Sigmoid colon (tissue), 7 donors: ENCODE measurements at regions of chr19 and their contacts with region 1.

Region 1: GRCh38 chr19:531009-531752 is 379 bp upstream of the CDC34 start:
- DNase-seq: peak; percentile 91
- H3K4me3 ChIP-seq: peak overlapping the region; percentile 74 to 94 (median 86)
- H3K27ac ChIP-seq: peak overlapping the region; percentile 98 to 100 (median 99)
- H3K4me1 ChIP-seq: peaks cover 0 to 43% (median 38%) of the 10 kb centered on the region in 4 donors
- H3K27me3 ChIP-seq: peaks cover 0 to 13% (median 6%) of the 10 kb centered on the region in 3 donors
- CTCF ChIP-seq: no peak
- EP300 ChIP-seq: no peak
- POLR2A ChIP-seq: no peak

Region 2: GRCh38 chr19:347946-348861 is 183.0 kb before region 1 on chr19:
- intact Hi-C with region 1: no loop called
- DNase-seq: peak; percentile 57
- H3K4me3 ChIP-seq: no peak overlapping the region
- H3K27ac ChIP-seq: no peak overlapping the region
- H3K4me1 ChIP-seq: peaks cover 0 to 16% (median 10%) of the 10 kb centered on the region in 4 donors
- H3K27me3 ChIP-seq: no peaks in the 10 kb centered on the region
- CTCF ChIP-seq: no peak
- EP300 ChIP-seq: no peak
- POLR2A ChIP-seq: no peak

Region 3: GRCh38 chr19:506404-507285 is 24.5 kb before region 1 on chr19:
- intact Hi-C with region 1: loop called (anchors 2 kb)
- DNase-seq: peak; percentile 100
- H3K4me3 ChIP-seq: peak overlapping the region; percentile 82 to 100 (median 98)
- H3K27ac ChIP-seq: peak overlapping the region; percentile 88 to 98 (median 96)
- H3K4me1 ChIP-seq: peaks cover 0 to 34% (median 31%) of the 10 kb centered on the region in 4 donors
- H3K27me3 ChIP-seq: no peaks in the 10 kb centered on the region
- CTCF ChIP-seq: peak; percentile 96 to 100 (median 99)
- EP300 ChIP-seq: no peak
- POLR2A ChIP-seq: no peak

Region 4: GRCh38 chr19:572140-572742 is 41.1 kb after region 1 on chr19 and contains the start of gene BSG:
- intact Hi-C with region 1: loop called (anchors 1 kb)
- DNase-seq: peak; percentile 99
- H3K4me3 ChIP-seq: peak within 1 kb of the TSS; percentile 98 to 100 (median 100)
- H3K27ac ChIP-seq: peak within 1 kb of the TSS; percentile 96 to 98 (median 97)
- H3K4me1 ChIP-seq: peaks cover 0 to 65% (median 54%) of the 10 kb centered on the region in 4 donors
- H3K27me3 ChIP-seq: no peaks in the 10 kb centered on the region
- CTCF ChIP-seq: no peak
- EP300 ChIP-seq: peak in 1 of 4 donors; percentile 58
- POLR2A ChIP-seq: peak; percentile 74 to 83
- total RNA-seq, gene BSG: 423 to 500 (median 482) TPM

Region 5: DNA sequence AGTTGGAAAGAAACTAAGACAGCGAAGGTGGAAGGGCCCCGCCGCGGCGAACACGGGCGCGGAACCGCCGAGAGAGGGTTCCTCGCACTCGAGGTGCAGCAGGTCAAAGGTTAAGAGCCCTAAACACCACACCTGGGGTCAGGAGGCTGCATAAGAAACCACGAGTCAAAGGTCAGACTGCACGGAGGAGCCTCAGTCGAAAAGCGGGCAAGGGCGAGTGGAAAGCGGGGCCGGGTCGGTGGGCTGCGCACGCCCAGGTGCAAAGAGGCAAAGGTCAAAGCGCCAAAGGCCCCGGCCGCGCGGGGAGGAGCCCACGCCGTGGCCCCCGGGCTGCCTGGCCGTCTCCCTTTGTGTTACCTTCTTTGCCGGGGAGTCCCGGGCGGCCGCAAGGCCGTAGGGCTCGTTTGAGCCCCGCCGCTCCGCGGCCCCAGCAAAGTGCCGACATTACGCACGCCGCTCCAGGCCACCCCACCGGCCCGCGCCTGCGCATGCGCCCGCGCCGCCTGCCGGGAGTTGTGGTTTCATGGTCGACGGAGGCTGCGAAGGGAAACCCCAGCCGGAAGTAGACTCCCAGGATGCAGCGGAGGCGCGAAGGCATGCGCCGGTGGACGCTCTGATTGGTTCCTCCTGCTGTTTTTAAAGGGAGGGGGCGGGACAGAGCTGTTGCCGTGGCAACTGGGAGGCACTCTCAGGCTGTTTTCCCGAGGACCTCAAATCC is 102.0 kb after region 1 on chr19 and contains the start of gene POLRMT:
- intact Hi-C with region 1: loop called (anchors 2 kb)
- DNase-seq: peak; percentile 99
- H3K4me3 ChIP-seq: peak within 1 kb of the TSS; percentile 71 to 95 (median 86)
- H3K27ac ChIP-seq: peak within 1 kb of the TSS; percentile 70 to 76 (median 72)
- H3K4me1 ChIP-seq: peaks cover 0 to 30% (median 23%) of the 10 kb centered on the region in 4 donors
- H3K27me3 ChIP-seq: no peaks in the 10 kb centered on the region
- CTCF ChIP-seq: peak in 1 of 4 experiments; percentile 19
- EP300 ChIP-seq: peak in 1 of 4 donors; percentile 12
- POLR2A ChIP-seq: no peak
- total RNA-seq, gene POLRMT: 18.2 to 26.3 (median 22.3) TPM

Region 6: DNA sequence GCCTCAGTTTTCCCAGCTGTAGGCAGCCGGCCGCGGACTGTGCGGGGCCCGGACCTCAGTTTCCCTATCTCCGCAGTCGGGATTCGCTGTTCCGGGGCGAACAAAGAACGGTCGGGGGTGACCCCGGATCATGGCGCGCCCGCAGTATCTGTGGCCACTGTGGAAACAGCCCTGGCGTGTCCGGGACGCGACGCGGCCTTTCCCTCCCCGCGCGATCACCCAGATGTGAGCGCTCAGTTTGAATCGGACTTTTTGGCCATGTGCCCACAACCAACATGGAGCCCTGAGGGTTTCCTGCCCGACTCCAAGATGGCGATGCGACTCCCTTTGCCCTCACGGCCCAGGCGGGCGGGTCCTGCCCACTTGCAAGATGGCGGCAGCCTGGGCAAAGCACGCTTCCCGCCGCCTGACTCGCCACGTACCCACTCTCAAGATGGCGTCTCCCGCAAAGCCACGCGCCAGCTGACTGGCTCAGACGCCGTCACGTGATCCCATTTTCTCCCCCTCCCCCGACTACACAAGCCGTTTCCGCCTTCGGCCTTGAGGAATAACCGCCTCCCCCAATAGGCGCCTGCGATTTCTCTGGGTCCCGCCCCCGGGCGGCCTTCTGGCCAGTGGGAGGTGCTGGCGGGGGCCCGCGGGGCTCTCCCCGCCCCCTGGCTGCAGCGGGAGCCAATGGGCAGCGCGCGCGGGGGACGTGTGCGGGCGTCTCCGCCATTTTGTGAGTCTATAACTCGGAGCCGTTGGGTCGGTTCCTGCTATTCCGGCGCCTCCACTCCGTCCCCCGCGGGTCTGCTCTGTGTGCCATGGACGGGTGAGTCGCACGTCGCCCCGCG is 265.7 kb after region 1 on chr19 and contains the start of gene PTBP1:
- intact Hi-C with region 1: loop called (anchors 2 kb)
- DNase-seq: peak; percentile 100
- H3K4me3 ChIP-seq: peak within 1 kb of the TSS; percentile 76 to 100 (median 96)
- H3K27ac ChIP-seq: peak within 1 kb of the TSS; percentile 93 to 100 (median 97)
- H3K4me1 ChIP-seq: peaks cover 0 to 51% (median 48%) of the 10 kb centered on the region in 4 donors
- H3K27me3 ChIP-seq: no peaks in the 10 kb centered on the region
- CTCF ChIP-seq: no peak
- EP300 ChIP-seq: no peak
- POLR2A ChIP-seq: no peak
- total RNA-seq, gene PTBP1: 53.8 to 94.5 (median 71.7) TPM